ENCODE measurements at regions of chr5 and their contacts with region 1.

Region 1: DNA sequence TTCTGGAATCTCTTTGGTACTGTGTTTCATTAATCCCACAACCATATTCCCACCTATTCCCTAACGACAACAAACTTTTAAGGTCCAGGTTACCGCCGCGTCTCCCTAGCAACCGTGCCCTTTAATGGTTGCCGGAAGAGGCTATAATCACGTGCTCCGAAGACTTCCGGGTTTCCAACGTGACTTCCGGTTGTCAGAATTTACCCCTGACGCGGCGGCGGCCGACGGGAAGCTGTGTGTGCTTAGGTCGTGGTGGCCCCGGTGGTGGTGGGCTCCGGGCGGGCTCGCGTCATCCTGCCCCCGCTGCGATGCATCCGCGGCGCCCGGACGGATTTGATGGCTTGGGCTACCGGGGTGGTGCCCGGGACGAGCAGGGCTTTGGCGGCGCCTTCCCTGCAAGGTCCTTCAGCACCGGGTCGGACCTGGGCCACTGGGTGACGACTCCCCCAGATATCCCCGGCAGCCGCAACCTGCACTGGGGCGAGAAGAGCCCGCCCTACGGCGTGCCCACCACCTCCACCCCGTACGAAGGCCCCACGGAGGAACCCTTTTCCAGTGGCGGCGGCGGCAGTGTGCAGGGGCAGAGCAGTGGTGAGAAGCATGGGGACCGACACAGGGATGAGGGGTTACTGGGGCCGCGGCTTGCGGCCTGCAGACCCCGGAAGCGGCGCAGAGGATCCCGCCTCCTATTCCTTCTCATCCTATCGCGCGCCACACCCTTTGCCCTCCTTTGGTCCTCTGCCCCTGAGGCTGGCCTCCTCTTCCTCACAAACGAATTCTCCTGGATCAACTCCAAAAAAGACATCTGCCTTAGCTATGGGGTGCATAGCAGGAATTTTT is at the start of gene SLC25A46:
- DNase-seq: peak; percentile 56
- ATAC-seq: peak; percentile 91
- H3K4me3 ChIP-seq: peak within 1 kb of the TSS; percentile 75
- H3K27ac ChIP-seq: peak within 1 kb of the TSS; percentile 90
- H3K4me1 ChIP-seq: 0 out of 2 replicates have a peak, but pooled peaks cover 3% of the 10 kb centered on the region
- H3K27me3 ChIP-seq: no peaks in the 10 kb centered on the region
- CTCF ChIP-seq: no peak
- EP300 ChIP-seq: no peak
- POLR2A ChIP-seq: peak; percentile 99
- RAD21 ChIP-seq: no peak
- polyA plus RNA-seq, gene SLC25A46: 18.0 to 31.0 TPM

Region 2: GRCh38 chr5:110329955-110330525 is 409.0 kb before region 1 on chr5:
- CTCF ChIA-PET with region 1: no interaction called
- POLR2A ChIA-PET with region 1: no interaction called
- RAD21 ChIA-PET with region 1: no interaction called
- SMC1A ChIA-PET with region 1: no interaction called
- in situ Hi-C with region 1: no loop called
- intact Hi-C with region 1: no loop called
- DNase-seq: no peak
- ATAC-seq: no peak
- H3K4me3 ChIP-seq: no peak overlapping the region
- H3K27ac ChIP-seq: no peak overlapping the region
- H3K4me1 ChIP-seq: no peaks in the 10 kb centered on the region
- H3K27me3 ChIP-seq: no peaks in the 10 kb centered on the region
- CTCF ChIP-seq: no peak
- EP300 ChIP-seq: no peak
- POLR2A ChIP-seq: no peak
- RAD21 ChIP-seq: no peak

Region 3: DNA sequence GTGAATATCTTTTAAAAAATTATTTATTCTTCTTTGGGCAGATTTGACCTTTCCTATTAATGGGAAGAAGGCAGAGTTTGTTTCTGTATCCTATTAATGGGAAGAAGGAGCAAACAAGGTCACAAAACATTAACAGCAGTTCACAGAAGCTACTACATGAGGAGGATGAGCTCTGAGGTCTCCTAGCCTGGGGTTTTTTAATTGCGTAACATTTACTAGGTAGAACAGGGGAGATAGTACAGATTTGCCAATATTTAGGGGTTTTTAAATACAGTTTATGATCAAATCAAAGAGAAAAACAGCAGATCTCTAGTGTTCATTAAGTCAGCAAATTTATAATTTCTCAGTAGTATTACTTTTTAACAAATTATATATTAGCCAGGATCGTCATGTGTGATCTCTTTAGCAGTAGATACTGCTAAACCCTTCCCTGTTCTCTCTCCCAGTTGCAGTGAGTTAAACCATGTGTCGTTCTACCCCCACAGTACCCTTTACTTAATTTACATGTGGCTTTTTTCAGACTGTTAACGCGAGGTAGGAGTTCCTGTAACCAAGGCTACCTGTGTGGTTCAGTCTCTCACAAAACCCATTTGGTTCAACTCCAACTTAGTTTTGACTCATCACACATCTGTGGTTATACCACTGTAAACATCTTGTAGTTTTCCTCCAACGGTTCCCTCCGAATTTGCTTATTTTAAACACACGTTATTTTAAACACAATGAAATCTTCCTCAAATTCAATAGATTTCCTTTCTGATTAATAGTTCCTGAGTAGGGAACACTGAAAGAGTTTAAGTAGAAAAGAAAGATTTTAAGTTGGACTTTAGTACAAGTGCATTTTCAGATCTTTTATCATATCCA is 13.1 kb after region 1 on chr5:
- CTCF ChIA-PET with region 1: interaction called, 33 read pairs
- POLR2A ChIA-PET with region 1: interaction called, 45 read pairs
- RAD21 ChIA-PET with region 1: interaction called, 30 read pairs
- SMC1A ChIA-PET with region 1: interaction called, 67 read pairs
- in situ Hi-C with region 1: no loop called
- intact Hi-C with region 1: loop called (anchors 1 kb)
- DNase-seq: peak; percentile 96
- ATAC-seq: peak; percentile 94
- H3K4me3 ChIP-seq: peak overlapping the region; percentile 46; the same call in 1 of the 2 replicates
- H3K27ac ChIP-seq: peak overlapping the region; percentile 96
- H3K4me1 ChIP-seq: peaks cover 30% of the 10 kb centered on the region
- H3K27me3 ChIP-seq: no peaks in the 10 kb centered on the region
- CTCF ChIP-seq: no peak
- EP300 ChIP-seq: peak; percentile 94 to 99
- POLR2A ChIP-seq: peak; percentile 57
- RAD21 ChIP-seq: no peak

Region 4: DNA sequence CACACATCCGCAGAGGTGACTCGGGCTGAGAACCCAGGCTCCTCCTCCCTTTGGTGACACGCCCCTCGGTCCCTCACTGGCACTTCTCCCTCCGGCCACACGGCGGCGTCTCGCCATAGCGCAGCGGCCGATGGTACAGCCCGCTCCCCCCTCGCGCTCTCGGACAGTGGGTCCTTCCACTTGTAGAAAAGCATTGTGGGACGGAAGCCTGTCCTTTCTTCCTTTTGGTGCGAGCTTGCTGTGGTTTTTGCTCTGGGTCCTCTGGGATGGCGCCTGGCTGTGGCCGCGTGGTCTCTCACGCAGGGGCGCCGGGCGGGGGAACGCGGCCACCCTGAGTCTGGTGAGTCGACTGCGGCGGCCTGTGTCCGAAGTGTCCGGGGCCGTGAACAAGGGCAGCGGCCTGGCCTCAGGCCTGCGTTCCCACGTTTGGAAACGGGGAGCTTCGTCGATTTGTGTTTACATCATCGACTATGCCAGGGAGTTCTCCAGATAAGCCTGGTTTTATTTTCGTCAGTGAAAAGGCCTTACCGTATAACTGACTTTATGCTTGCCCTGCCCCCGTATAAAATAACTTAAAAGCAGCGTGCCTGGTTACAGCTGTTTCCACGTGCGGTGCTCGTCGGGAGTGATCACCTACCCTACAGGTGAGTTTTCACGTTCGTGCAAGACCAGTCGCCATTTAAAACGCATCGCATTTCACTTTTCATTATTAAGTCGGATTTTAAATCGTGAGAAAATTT is 1421.8 kb after region 1 on chr5:
- CTCF ChIA-PET with region 1: no interaction called
- POLR2A ChIA-PET with region 1: no interaction called
- RAD21 ChIA-PET with region 1: no interaction called
- SMC1A ChIA-PET with region 1: no interaction called
- in situ Hi-C with region 1: loop called (anchors 10 kb)
- intact Hi-C with region 1: no loop called
- DNase-seq: peak; percentile 79
- ATAC-seq: peak; percentile 97
- H3K4me3 ChIP-seq: peak overlapping the region; percentile 99
- H3K27ac ChIP-seq: peak overlapping the region; percentile 70
- H3K4me1 ChIP-seq: no peaks in the 10 kb centered on the region
- H3K27me3 ChIP-seq: no peaks in the 10 kb centered on the region
- CTCF ChIP-seq: peak; percentile 99 to 100 (median 100); a peak in 5 of 6 replicates
- EP300 ChIP-seq: no peak; a peak in 1 of 4 replicates
- POLR2A ChIP-seq: peak; percentile 100
- RAD21 ChIP-seq: peak; percentile 42; the same call in 1 of the 2 replicates